Left ventricle myocardium inferior (tissue), 1 donor: ENCODE measurements at regions of chr1 and their contacts with region 1.

Region 1: DNA sequence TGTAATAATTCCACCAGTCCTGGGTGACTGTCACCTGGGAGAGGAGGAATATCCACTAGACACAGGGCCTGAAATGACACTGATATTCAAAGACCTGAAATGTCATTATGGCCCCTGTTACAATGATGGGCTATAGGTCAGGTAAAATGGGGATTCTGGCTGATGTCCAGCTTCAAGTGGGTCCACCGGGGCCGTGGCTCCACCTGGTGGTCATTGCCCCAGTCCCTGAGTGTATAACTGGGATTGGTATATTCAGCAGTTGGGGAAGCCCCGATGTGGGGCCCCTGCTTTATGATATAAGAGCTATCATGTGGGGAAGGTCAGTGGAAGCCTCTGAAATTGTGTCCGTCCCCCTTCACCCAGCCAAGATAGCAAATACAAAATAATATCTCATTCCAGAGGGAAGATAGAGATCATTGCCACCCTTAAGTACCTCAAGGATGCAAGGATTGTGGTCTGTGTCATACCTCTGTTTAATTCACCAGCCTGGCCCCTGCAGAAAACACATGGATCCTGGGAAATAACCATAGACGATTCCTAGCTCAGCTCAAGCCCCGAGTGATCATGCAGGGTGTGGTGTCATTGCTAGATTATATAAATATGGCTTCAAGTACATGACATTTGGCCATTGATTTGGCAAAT is 19.4 kb downstream of the PLEKHO1 start:
- DNase-seq: peak; percentile 67
- H3K4me3 ChIP-seq: no peak overlapping the region
- H3K27ac ChIP-seq: no peak overlapping the region
- H3K4me1 ChIP-seq: peaks cover 20% of the 10 kb centered on the region
- H3K27me3 ChIP-seq: no peaks in the 10 kb centered on the region
- CTCF ChIP-seq: peak; percentile 88

Region 2: DNA sequence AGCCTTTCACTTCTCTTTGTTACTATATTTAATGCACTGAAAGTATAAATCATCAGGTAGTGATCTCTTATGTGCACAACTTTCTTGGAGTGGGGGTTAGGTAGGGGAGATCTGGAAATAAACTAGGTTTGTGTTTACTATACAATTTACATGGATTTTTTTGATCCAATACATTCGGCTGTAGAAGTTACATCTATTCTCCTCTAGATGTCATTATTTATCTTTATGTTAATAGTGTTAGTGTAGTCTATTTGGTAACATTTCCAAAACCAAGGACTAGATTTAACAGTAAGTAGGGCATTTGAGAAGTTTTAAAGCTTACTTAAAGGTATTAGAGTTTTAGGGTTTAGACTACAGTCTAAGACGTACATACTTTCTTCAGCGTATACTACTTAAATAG is 96.1 kb before region 1 on chr1:
- intact Hi-C with region 1: loop called (anchors 5 kb)
- DNase-seq: no peak
- H3K4me3 ChIP-seq: no peak overlapping the region
- H3K27ac ChIP-seq: no peak overlapping the region
- H3K4me1 ChIP-seq: peaks cover 32% of the 10 kb centered on the region
- H3K27me3 ChIP-seq: no peaks in the 10 kb centered on the region
- CTCF ChIP-seq: peak; percentile 63